ENCODE measurements at regions of chr4 and their contacts with region 1.

Region 1: GRCh38 chr4:94406668-94407437 is 44.9 kb upstream of the PDLIM5 start:
- DNase-seq: peak; percentile 81
- ATAC-seq: peak; percentile 71
- H3K4me3 Mint-ChIP-seq: no peak overlapping the region
- H3K27ac Mint-ChIP-seq: no peak overlapping the region
- H3K4me1 Mint-ChIP-seq: no peaks in the 10 kb centered on the region
- H3K27me3 Mint-ChIP-seq: peaks cover 2% of the 10 kb centered on the region
- CTCF ChIP-seq: peak; percentile 85

Region 2: DNA sequence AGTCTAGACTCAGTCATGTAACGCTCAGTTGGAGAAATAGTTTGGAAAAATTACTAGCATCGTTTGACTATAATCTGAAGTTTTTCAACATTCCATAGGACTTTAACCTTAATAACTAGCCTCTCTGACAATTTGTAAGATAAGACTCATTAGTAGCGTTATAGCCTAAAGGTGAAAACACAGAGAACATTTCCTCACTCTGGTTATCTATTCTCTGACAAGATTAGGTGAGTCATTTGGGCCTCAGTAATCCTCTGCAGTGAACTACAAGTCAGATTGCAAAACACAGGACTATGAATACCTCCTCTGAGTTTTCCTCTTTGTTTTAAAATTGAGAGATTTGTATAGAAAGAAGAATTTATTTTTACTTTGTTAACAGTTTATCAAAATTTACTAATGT is 13.1 kb after region 1 on chr4:
- CTCF ChIA-PET with region 1: interaction called, 19 read pairs
- POLR2A ChIA-PET with region 1: no interaction called
- intact Hi-C with region 1: no loop called
- DNase-seq: no peak
- ATAC-seq: no peak
- H3K4me3 Mint-ChIP-seq: no peak overlapping the region
- H3K27ac Mint-ChIP-seq: no peak overlapping the region
- H3K4me1 Mint-ChIP-seq: no peaks in the 10 kb centered on the region
- H3K27me3 Mint-ChIP-seq: peaks cover 9% of the 10 kb centered on the region
- CTCF ChIP-seq: no peak

Region 3: DNA sequence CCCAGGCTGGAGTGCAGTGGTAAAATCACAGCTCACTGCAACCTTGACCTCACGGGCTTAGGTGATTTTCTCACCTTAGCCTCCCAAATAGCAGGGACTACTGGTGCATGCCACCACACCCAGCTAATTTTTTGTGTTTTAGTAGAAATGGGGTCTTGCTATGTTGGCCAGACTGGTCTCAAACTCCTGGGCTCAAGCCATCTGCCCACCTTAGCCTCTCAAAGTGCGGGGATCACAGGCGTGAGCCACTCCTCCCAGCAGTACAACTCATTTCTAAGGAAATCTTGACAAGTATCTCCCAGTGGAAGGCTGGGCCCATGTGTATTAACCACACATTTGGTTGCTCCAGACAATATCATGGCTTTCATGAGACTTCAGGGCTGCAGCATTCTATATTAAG is 24.5 kb after region 1 on chr4:
- CTCF ChIA-PET with region 1: interaction called, 11 read pairs
- POLR2A ChIA-PET with region 1: no interaction called
- intact Hi-C with region 1: no loop called
- DNase-seq: no peak
- ATAC-seq: no peak
- H3K4me3 Mint-ChIP-seq: no peak overlapping the region
- H3K27ac Mint-ChIP-seq: no peak overlapping the region
- H3K4me1 Mint-ChIP-seq: no peaks in the 10 kb centered on the region
- H3K27me3 Mint-ChIP-seq: peaks cover 2% of the 10 kb centered on the region
- CTCF ChIP-seq: no peak

Region 4: GRCh38 chr4:94595879-94596483 is 189.1 kb after region 1 on chr4:
- CTCF ChIA-PET with region 1: interaction called, 14 read pairs
- POLR2A ChIA-PET with region 1: no interaction called
- intact Hi-C with region 1: loop called (anchors 2 kb)
- DNase-seq: no peak
- ATAC-seq: peak; percentile 45
- H3K4me3 Mint-ChIP-seq: no peak overlapping the region
- H3K27ac Mint-ChIP-seq: no peak overlapping the region
- H3K4me1 Mint-ChIP-seq: no peaks in the 10 kb centered on the region
- H3K27me3 Mint-ChIP-seq: no peaks in the 10 kb centered on the region
- CTCF ChIP-seq: peak; percentile 67

Region 5: GRCh38 chr4:94610145-94610544 is 203.3 kb after region 1 on chr4:
- CTCF ChIA-PET with region 1: interaction called, 13 read pairs
- POLR2A ChIA-PET with region 1: no interaction called
- intact Hi-C with region 1: no loop called
- DNase-seq: no peak
- ATAC-seq: no peak
- H3K4me3 Mint-ChIP-seq: peak overlapping the region; percentile 40
- H3K27ac Mint-ChIP-seq: no peak overlapping the region
- H3K4me1 Mint-ChIP-seq: peaks cover 12% of the 10 kb centered on the region
- H3K27me3 Mint-ChIP-seq: no peaks in the 10 kb centered on the region
- CTCF ChIP-seq: no peak

Region 6: DNA sequence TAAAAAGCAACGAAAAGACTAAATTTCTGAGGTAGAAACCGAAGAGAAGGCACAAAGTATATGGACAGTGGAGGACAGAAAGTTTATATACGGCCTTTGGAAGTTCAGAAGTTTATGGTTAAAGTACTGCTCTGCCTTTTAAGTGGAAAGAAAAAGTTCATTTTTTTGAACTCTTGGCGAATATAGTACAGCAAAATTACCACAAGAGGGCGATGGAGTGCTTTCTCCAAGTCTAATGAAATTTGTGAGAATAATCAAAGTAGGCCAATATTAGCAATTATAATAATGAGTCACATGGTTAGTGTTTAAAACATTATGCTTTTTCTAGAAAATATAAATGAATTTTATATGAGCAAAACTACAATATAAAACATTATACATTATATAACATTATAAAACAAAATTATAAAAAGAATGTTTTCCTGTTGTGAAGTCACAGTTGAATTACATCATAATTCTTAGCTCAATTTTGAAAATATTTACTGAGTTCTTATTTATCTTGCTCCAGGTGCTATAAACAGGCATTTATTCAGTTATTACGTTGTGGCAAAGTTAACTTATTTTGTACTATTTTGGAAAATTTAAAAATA is 214.7 kb after region 1 on chr4:
- CTCF ChIA-PET with region 1: interaction called, 11 read pairs
- POLR2A ChIA-PET with region 1: no interaction called
- intact Hi-C with region 1: no loop called
- DNase-seq: peak; percentile 5
- ATAC-seq: no peak
- H3K4me3 Mint-ChIP-seq: no peak overlapping the region
- H3K27ac Mint-ChIP-seq: no peak overlapping the region
- H3K4me1 Mint-ChIP-seq: no peaks in the 10 kb centered on the region
- H3K27me3 Mint-ChIP-seq: no peaks in the 10 kb centered on the region
- CTCF ChIP-seq: peak; percentile 83

Measured in activated CD8-positive, alpha-beta T cell treated with anti-CD3 and anti-CD28 coated beads for 36 hours (primary cell).